Calu3 (cell line): ENCODE measurements at regions of chr6 and their contacts with region 1.

Region 1: DNA sequence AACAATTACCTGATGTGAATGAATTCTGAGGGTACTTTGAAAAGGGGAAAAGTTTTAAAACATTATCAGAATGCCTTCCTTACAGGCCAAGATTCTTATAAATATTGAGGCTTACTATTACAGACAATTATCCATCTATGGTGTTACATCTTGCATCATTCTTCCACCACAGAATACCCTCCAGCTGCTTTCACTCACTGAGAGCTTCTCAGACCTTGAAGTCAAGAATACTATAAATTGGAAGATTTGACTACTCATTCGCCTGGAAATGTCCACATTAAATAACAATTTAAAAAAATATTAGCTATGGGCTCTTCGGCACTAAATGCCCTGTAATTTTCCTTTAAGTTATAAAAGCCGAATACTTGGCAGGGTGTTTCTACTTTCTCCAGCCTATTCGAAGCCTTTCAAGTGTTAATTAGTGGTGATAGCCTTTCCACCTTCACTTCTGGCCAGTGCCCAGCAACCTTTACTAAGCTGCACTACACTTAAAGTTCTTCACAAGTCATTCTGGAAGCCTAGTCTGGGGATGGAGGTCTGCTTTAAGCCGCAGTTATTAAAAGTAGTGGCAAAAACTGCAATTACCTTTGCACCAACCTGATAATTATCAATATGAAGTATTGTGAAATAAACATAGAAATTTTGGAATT is 101.0 kb downstream of the BMP5 start:
- DNase-seq: no peak
- H3K4me3 Mint-ChIP-seq: no peak overlapping the region
- H3K27ac Mint-ChIP-seq: no peak overlapping the region
- H3K4me1 Mint-ChIP-seq: no peaks in the 10 kb centered on the region
- H3K27me3 Mint-ChIP-seq: peaks cover 12% of the 10 kb centered on the region
- CTCF ChIP-seq: no peak

Region 2: GRCh38 chr6:55636405-55637102 is 137.9 kb before region 1 on chr6:
- CTCF ChIA-PET with region 1: no interaction called
- intact Hi-C with region 1: no loop called
- DNase-seq: no peak
- H3K4me3 Mint-ChIP-seq: no peak overlapping the region
- H3K27ac Mint-ChIP-seq: no peak overlapping the region
- H3K4me1 Mint-ChIP-seq: no peaks in the 10 kb centered on the region
- H3K27me3 Mint-ChIP-seq: no peaks in the 10 kb centered on the region
- CTCF ChIP-seq: no peak

Region 3: DNA sequence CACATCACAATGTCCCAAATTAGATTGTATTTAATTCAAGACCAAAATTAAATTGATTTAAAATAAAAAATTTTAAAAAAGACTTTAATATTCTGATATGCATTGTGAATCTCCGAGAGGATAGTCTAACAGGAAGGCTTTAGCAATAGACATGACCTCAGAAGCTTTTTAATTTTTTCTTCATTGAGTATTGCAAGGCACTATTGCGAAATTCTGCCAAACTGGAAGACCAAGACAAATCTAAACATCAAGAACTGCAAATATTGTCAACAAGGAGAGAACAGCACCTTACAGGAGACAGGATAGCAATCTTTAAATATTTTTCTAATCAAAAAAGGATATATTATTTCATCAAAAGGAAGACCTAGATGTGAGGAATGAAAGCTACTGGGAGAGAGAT is 44.1 kb after region 1 on chr6:
- CTCF ChIA-PET with region 1: no interaction called
- intact Hi-C with region 1: loop called (anchors 2 kb)
- DNase-seq: no peak
- H3K4me3 Mint-ChIP-seq: no peak overlapping the region
- H3K27ac Mint-ChIP-seq: no peak overlapping the region
- H3K4me1 Mint-ChIP-seq: no peaks in the 10 kb centered on the region
- H3K27me3 Mint-ChIP-seq: no peaks in the 10 kb centered on the region
- CTCF ChIP-seq: no peak

Region 4: DNA sequence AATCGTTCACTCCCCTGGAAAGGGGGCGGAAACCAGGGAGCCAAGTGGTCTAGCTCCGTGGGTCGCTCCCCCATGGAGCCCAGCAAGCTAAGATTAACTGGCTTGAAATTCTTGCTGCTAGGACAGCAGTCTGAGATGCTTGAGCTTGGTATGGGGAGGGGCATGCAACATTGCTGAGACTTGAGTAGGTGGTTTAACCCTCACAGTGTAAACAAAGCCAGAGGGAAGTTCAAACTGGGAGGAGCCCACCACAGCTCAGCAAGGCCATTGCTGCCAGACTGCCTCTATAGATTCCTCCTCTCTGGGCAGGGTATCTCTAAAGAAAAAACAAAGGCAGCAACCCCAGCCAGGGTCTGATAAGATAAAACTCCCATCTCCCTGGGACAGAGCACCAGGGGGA is 429.7 kb after region 1 on chr6:
- CTCF ChIA-PET with region 1: no interaction called
- intact Hi-C with region 1: no loop called
- DNase-seq: no peak
- H3K4me3 Mint-ChIP-seq: no peak overlapping the region
- H3K27ac Mint-ChIP-seq: no peak overlapping the region
- H3K4me1 Mint-ChIP-seq: no peaks in the 10 kb centered on the region
- H3K27me3 Mint-ChIP-seq: no peaks in the 10 kb centered on the region
- CTCF ChIP-seq: no peak